MCF 10A (cell line): ENCODE measurements at regions of chr4 and their contacts with region 1.

Region 1: GRCh38 chr4:39621582-39621981 is 17.1 kb downstream of the SMIM14 start:
- DNase-seq: peak; percentile 81
- H3K4me3 Mint-ChIP-seq: no peak overlapping the region
- H3K27ac Mint-ChIP-seq: no peak overlapping the region
- H3K4me1 Mint-ChIP-seq: peaks cover 7% of the 10 kb centered on the region
- H3K27me3 Mint-ChIP-seq: no peaks in the 10 kb centered on the region
- CTCF ChIP-seq: no peak

Region 2: DNA sequence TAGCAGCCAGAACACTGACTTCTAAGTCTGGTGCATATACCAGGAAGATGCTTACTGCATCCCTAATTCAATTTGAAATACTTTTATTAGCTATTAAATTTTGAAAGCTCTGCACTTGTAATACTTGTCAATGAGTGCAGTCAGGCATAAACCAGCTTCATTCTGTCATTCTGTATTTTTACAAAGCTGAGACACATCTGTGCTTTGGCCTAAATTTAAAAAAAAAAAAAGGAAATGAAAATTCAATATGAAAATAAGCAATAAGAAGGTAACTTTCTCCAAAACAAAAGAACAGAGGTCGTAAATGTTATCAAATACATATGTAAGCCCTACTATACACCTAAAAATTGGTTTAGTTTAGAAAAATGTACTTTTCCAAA is 10.1 kb after region 1 on chr4:
- CTCF ChIA-PET with region 1: interaction called, 4 read pairs
- POLR2A ChIA-PET with region 1: interaction called, 71 read pairs
- intact Hi-C with region 1: no loop called
- DNase-seq: no peak
- H3K4me3 Mint-ChIP-seq: no peak overlapping the region
- H3K27ac Mint-ChIP-seq: no peak overlapping the region
- H3K4me1 Mint-ChIP-seq: peaks cover 15% of the 10 kb centered on the region
- H3K27me3 Mint-ChIP-seq: no peaks in the 10 kb centered on the region
- CTCF ChIP-seq: no peak

Region 3: GRCh38 chr4:40003986-40004385 is 382.4 kb after region 1 on chr4:
- CTCF ChIA-PET with region 1: no interaction called
- POLR2A ChIA-PET with region 1: no interaction called
- intact Hi-C with region 1: no loop called
- DNase-seq: no peak
- H3K4me3 Mint-ChIP-seq: no peak overlapping the region
- H3K27ac Mint-ChIP-seq: no peak overlapping the region
- H3K4me1 Mint-ChIP-seq: no peaks in the 10 kb centered on the region
- H3K27me3 Mint-ChIP-seq: no peaks in the 10 kb centered on the region
- CTCF ChIP-seq: no peak

Region 4: DNA sequence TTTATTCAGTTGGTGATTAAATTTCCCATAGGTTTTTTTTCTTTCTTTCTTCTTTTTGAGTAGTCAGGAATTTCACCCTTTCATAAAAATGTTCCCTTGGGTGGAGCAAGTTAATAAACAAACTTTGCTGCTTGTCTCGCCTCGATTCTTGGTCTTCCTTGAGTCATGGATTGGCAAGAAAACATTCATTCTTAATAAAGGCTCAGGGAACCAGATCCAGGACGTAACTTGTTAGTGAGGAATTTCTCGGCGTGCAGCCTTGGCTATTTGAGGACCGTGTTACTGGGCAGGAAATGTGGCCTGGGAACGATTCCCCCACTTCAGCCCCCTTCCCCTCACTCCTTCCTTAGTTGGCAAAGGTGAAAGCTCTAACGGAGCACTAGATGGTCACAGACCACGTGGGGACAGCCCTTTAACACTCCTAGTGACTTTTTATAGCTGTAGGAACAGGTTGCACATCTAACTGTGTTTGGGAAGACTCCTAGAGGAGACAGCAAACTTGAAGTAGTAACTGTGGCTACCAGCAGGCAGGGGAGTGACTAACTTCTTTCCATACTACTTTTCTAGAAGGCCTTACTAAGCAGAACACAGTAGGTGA is 1741.9 kb after region 1 on chr4:
- CTCF ChIA-PET with region 1: no interaction called
- POLR2A ChIA-PET with region 1: no interaction called
- intact Hi-C with region 1: no loop called
- DNase-seq: peak; percentile 64
- H3K4me3 Mint-ChIP-seq: peak overlapping the region; percentile 89
- H3K27ac Mint-ChIP-seq: peak overlapping the region; percentile 75
- H3K4me1 Mint-ChIP-seq: peaks cover 30% of the 10 kb centered on the region
- H3K27me3 Mint-ChIP-seq: no peaks in the 10 kb centered on the region
- CTCF ChIP-seq: no peak